Caco-2 (cell line): ENCODE measurements at regions of chr4 and their contacts with region 1.

Region 1: DNA sequence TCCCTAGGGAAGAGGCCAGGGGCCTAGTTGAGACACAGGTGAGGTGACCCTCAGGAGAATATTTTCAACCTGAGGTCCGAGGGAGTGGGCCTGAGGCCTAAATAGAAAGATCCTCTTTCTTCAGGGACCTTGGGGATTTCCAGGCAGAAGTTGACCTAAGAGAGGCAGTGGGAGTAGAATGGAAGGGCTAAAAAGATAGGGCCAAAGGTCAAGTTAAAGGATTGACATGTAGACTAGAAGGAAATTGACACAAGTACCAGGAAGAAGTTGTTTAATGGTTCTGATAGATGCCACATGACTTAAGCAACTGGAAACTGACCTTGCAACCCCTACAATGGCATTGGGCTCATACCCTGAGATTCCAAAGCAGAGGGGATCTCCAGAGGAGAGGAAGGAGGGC is 76.9 kb downstream of the SHROOM3 start:
- DNase-seq: no peak
- H3K4me3 ChIP-seq: no peak overlapping the region
- H3K4me3 Mint-ChIP-seq: no peak overlapping the region
- H3K27ac Mint-ChIP-seq: peak overlapping the region; percentile 30
- H3K4me1 ChIP-seq: no peaks in the 10 kb centered on the region
- H3K4me1 Mint-ChIP-seq: peaks cover 11% of the 10 kb centered on the region
- H3K27me3 ChIP-seq: no peaks in the 10 kb centered on the region
- H3K27me3 Mint-ChIP-seq: no peaks in the 10 kb centered on the region
- CTCF ChIP-seq: no peak

Region 2: GRCh38 chr4:76401654-76402053 is 110.3 kb before region 1 on chr4:
- CTCF ChIA-PET with region 1: no interaction called
- POLR2A ChIA-PET with region 1: no interaction called
- intact Hi-C with region 1: no loop called
- DNase-seq: no peak
- H3K4me3 ChIP-seq: no peak overlapping the region
- H3K4me3 Mint-ChIP-seq: no peak overlapping the region
- H3K27ac Mint-ChIP-seq: no peak overlapping the region
- H3K4me1 ChIP-seq: no peaks in the 10 kb centered on the region
- H3K4me1 Mint-ChIP-seq: no peaks in the 10 kb centered on the region
- H3K27me3 ChIP-seq: no peaks in the 10 kb centered on the region
- H3K27me3 Mint-ChIP-seq: peaks cover 37% of the 10 kb centered on the region
- CTCF ChIP-seq: no peak

Region 3: DNA sequence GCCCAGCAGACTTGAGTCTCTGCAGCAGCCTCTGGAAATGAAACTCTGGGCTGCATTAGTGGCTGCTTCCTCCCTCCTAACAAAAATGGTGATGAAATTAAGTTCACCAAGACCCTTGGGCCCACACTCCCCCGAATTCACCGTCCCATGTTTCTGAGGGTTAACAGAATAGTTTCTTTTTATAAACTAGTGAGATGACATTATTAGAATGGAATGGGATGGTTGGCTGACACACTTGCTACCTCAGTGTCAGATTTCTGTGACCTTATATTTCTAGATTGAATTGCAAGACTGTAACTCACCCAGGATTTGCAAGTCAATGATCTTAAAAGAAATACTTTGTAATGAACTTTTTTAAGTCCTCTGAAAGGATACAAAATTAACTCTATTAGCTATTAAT is 50.2 kb after region 1 on chr4:
- CTCF ChIA-PET with region 1: interaction called, 4 read pairs
- POLR2A ChIA-PET with region 1: no interaction called
- intact Hi-C with region 1: loop called (anchors 1 kb)
- DNase-seq: no peak
- H3K4me3 ChIP-seq: no peak overlapping the region
- H3K4me3 Mint-ChIP-seq: no peak overlapping the region
- H3K27ac Mint-ChIP-seq: no peak overlapping the region
- H3K4me1 ChIP-seq: peaks cover 17% of the 10 kb centered on the region
- H3K4me1 Mint-ChIP-seq: peaks cover 7% of the 10 kb centered on the region
- H3K27me3 ChIP-seq: no peaks in the 10 kb centered on the region
- H3K27me3 Mint-ChIP-seq: no peaks in the 10 kb centered on the region
- CTCF ChIP-seq: no peak

Region 4: DNA sequence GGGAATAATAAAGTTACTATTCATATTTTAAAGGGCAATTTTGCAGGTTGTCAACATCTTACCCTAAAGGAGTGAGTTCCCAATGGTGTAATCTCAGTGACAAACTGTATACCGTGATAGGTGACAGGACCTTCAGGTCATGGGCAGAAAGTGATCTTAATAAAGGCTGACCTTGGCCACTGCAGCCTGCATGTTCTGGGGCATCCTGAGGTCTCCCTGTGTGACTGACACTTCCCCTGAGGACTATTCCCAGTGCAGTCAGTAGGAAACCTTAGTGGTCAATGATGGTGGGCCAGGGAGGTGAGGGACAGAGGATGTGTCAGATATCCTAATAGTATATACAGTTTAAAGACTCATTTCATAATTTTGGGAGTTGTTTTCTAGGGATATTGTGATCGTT is 60.3 kb after region 1 on chr4:
- CTCF ChIA-PET with region 1: no interaction called
- POLR2A ChIA-PET with region 1: no interaction called
- intact Hi-C with region 1: no loop called
- DNase-seq: no peak
- H3K4me3 ChIP-seq: no peak overlapping the region
- H3K4me3 Mint-ChIP-seq: no peak overlapping the region
- H3K27ac Mint-ChIP-seq: no peak overlapping the region
- H3K4me1 ChIP-seq: peaks cover 23% of the 10 kb centered on the region
- H3K4me1 Mint-ChIP-seq: peaks cover 36% of the 10 kb centered on the region
- H3K27me3 ChIP-seq: no peaks in the 10 kb centered on the region
- H3K27me3 Mint-ChIP-seq: no peaks in the 10 kb centered on the region
- CTCF ChIP-seq: no peak

Region 5: GRCh38 chr4:76658231-76659102 is 146.5 kb after region 1 on chr4:
- CTCF ChIA-PET with region 1: interaction called, 3 read pairs
- POLR2A ChIA-PET with region 1: no interaction called
- intact Hi-C with region 1: loop called (anchors 5 kb)
- DNase-seq: no peak
- H3K4me3 ChIP-seq: no peak overlapping the region
- H3K4me3 Mint-ChIP-seq: no peak overlapping the region
- H3K27ac Mint-ChIP-seq: no peak overlapping the region
- H3K4me1 ChIP-seq: peaks cover 29% of the 10 kb centered on the region
- H3K4me1 Mint-ChIP-seq: peaks cover 30% of the 10 kb centered on the region
- H3K27me3 ChIP-seq: no peaks in the 10 kb centered on the region
- H3K27me3 Mint-ChIP-seq: no peaks in the 10 kb centered on the region
- CTCF ChIP-seq: no peak

Region 6: DNA sequence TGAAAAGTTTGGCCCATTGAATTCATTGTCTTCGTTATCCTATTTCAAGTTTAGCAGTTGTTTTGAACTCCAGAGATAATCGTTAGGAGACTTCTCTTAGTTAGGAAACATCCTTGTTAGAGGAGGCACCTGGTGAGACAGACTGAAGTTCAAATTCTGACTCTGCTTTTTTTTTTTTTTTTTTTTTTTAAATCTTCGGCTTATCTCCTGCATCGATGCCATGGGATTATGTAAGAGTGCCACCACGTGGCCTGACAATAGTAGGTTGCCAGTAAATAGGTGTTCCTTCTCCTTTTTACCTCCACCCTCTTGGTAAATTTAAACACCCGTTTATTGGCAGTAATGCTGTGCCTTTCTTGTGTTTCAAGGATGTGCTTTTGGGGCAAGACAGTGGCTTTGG is 236.7 kb after region 1 on chr4:
- CTCF ChIA-PET with region 1: no interaction called
- POLR2A ChIA-PET with region 1: no interaction called
- intact Hi-C with region 1: loop called (anchors 1 kb)
- DNase-seq: peak in 1 of 2 experiments; percentile 37
- H3K4me3 ChIP-seq: no peak overlapping the region
- H3K4me3 Mint-ChIP-seq: no peak overlapping the region
- H3K27ac Mint-ChIP-seq: no peak overlapping the region
- H3K4me1 ChIP-seq: 0 out of 2 replicates have a peak, but pooled peaks cover 3% of the 10 kb centered on the region
- H3K4me1 Mint-ChIP-seq: peaks cover 14% of the 10 kb centered on the region
- H3K27me3 ChIP-seq: no peaks in the 10 kb centered on the region
- H3K27me3 Mint-ChIP-seq: no peaks in the 10 kb centered on the region
- CTCF ChIP-seq: peak in 1 of 2 experiments; percentile 27

Region 7: GRCh38 chr4:76949276-76950051 is 437.5 kb after region 1 on chr4 and contains the start of gene SEPTIN11:
- CTCF ChIA-PET with region 1: no interaction called
- POLR2A ChIA-PET with region 1: no interaction called
- intact Hi-C with region 1: loop called (anchors 1 kb)
- DNase-seq: peak; percentile 94 to 95
- H3K4me3 ChIP-seq: peak within 1 kb of the TSS; percentile 94
- H3K4me3 Mint-ChIP-seq: peak within 1 kb of the TSS; percentile 100
- H3K27ac Mint-ChIP-seq: peak within 1 kb of the TSS; percentile 97
- H3K4me1 ChIP-seq: peaks cover 5% of the 10 kb centered on the region; the same call in 1 of the 2 replicates
- H3K4me1 Mint-ChIP-seq: peaks cover 12% of the 10 kb centered on the region
- H3K27me3 ChIP-seq: no peaks in the 10 kb centered on the region
- H3K27me3 Mint-ChIP-seq: no peaks in the 10 kb centered on the region
- CTCF ChIP-seq: no peak
- total RNA-seq, gene SEPTIN11: 119 and 127 TPM in 2 replicates